PC-9 (cell line): ENCODE measurements at regions of chr14 and their contacts with region 1.

Region 1: GRCh38 chr14:64841121-64841651 is 38.5 kb downstream of the SPTB start:
- DNase-seq: peak; percentile 77
- H3K4me3 ChIP-seq: no peak overlapping the region
- H3K27ac ChIP-seq: no peak overlapping the region
- H3K4me1 ChIP-seq: peaks cover 34% of the 10 kb centered on the region
- H3K27me3 ChIP-seq: peaks cover 27% of the 10 kb centered on the region
- CTCF ChIP-seq: peak; percentile 88

Region 2: GRCh38 chr14:63788011-63788933 is 1052.9 kb before region 1 on chr14:
- CTCF ChIA-PET with region 1: no interaction called
- POLR2A ChIA-PET with region 1: no interaction called
- intact Hi-C with region 1: no loop called
- DNase-seq: no peak
- H3K4me3 ChIP-seq: no peak overlapping the region
- H3K27ac ChIP-seq: no peak overlapping the region
- H3K4me1 ChIP-seq: no peaks in the 10 kb centered on the region
- H3K27me3 ChIP-seq: no peaks in the 10 kb centered on the region
- CTCF ChIP-seq: no peak

Region 3: DNA sequence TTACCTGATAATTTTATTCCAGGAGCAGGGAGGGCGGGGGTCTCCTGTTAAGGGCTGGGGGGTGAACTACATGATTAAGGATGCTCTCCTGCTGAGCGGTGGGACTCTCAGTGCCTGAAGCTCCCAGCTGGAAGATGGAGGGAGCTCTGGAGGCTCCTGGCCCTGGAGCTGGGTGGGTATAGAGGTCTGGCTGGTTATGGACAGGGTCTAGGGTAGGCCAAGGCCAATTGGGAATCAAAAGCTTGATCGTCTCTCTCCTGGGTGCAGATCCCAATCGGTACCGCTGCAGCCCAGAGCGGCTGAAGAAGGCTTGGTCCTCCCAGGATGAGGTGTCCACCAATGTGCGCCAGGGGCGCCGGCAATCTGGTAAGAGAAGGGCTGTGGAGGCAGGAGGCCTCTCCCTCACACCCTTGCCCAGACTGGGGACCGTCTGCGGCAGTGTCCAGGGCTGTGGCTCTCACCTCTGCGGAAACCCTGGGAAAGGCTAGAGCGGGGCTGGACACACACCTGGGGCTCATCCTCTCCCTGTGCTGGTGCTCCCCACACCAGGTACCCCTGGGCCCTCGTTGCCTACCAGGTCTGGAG is 108.6 kb before region 1 on chr14:
- CTCF ChIA-PET with region 1: interaction called, 12 read pairs
- POLR2A ChIA-PET with region 1: no interaction called
- intact Hi-C with region 1: no loop called
- DNase-seq: no peak
- H3K4me3 ChIP-seq: no peak overlapping the region
- H3K27ac ChIP-seq: no peak overlapping the region
- H3K4me1 ChIP-seq: no peaks in the 10 kb centered on the region
- H3K27me3 ChIP-seq: no peaks in the 10 kb centered on the region
- CTCF ChIP-seq: no peak

Region 4: GRCh38 chr14:64806202-64806860 is 34.9 kb before region 1 on chr14:
- CTCF ChIA-PET with region 1: interaction called, 3 read pairs
- POLR2A ChIA-PET with region 1: no interaction called
- intact Hi-C with region 1: loop called (anchors 2 kb)
- DNase-seq: peak; percentile 85 to 98
- H3K4me3 ChIP-seq: peak overlapping the region; percentile 11; the same call in 1 of the 2 replicates
- H3K27ac ChIP-seq: peak overlapping the region; percentile 84
- H3K4me1 ChIP-seq: peaks cover 41% of the 10 kb centered on the region
- H3K27me3 ChIP-seq: no peaks in the 10 kb centered on the region
- CTCF ChIP-seq: no peak

Region 5: DNA sequence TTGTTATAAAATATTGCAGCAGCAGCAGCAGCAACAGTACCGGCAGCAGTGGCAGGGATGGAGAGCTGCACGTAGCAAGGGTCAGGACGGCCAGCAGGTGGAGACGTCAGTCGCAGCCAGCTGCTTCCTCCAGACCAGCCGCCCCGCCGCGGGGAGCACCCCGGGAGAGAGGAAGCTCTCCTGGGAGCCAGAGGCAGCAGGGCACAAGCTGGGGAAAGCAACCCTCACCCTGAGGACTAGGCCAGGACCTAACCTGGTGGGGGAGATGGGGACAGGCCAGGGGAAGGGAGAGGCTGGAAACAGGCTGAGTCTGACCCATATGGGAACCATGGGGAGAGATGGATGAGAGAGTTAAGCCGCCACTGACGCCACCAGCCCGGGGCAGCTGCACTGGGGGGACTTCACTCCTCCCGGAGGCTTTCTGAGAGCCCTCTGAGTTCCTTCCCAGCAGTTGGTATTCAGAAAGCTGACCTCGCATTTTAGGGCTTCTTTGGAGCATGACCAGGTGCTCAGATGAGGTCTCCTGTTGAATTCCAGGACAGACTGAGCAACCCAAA is 17.8 kb before region 1 on chr14:
- CTCF ChIA-PET with region 1: interaction called, 10 read pairs
- POLR2A ChIA-PET with region 1: no interaction called
- intact Hi-C with region 1: no loop called
- DNase-seq: peak; percentile 56 to 74
- H3K4me3 ChIP-seq: no peak overlapping the region; the same call in 1 of the 2 replicates
- H3K27ac ChIP-seq: no peak overlapping the region
- H3K4me1 ChIP-seq: no peaks in the 10 kb centered on the region
- H3K27me3 ChIP-seq: peaks cover 10% of the 10 kb centered on the region; the same call in 1 of the 2 replicates
- CTCF ChIP-seq: peak; percentile 90

Region 6: DNA sequence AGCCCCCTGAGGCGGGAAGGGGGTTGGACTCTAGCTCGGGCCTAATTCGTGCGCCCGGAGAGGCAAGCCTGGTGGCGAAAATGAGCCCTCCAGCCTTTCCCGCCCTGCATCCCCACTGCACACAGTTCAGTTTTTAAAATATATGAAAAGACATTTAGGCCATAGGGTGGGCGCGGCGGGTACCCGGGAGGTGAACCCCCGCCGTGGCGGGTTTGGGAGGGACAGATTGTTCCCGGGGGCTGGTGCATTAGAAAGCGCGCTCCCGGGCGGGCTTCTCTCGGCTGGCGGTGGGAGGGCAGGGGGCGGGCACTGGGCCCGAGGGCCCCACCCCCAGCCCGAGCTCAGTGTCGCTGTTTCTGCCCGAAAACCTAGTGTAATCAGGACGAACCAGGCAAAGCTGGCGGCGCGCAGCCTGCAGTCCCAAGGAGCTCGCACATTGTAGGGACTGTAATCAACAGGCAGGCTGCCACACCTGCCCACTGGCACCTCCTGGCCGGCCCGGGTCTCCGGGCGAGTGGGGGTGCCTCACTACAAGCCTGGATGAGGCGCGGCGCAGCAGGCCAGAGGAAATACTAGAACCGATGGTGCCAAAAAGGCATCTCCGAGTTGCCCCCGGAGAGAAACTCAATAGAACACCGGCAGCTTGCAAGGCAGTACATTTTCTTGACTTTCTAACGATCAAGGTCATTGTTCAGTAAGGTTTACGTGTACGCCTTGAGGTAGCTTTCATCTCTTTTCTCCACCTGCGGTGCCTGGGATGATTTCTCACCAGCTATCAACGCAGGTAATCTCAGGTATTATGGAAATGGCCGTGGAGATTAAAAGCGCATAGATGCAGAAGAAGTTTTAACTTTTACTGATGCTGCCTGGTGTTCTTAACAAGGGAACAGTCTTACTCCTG is 39.3 kb after region 1 on chr14:
- CTCF ChIA-PET with region 1: no interaction called
- POLR2A ChIA-PET with region 1: no interaction called
- intact Hi-C with region 1: loop called (anchors 5 kb)
- DNase-seq: peak in 1 of 2 experiments; percentile 67
- H3K4me3 ChIP-seq: peak overlapping the region; percentile 91
- H3K27ac ChIP-seq: no peak overlapping the region
- H3K4me1 ChIP-seq: peaks cover 4% of the 10 kb centered on the region; the same call in 1 of the 2 replicates
- H3K27me3 ChIP-seq: peaks cover 72% of the 10 kb centered on the region
- CTCF ChIP-seq: no peak